Mucosa of descending colon (tissue), 3 donors: ENCODE measurements at regions of chr12 and their contacts with region 1.

Region 1: DNA sequence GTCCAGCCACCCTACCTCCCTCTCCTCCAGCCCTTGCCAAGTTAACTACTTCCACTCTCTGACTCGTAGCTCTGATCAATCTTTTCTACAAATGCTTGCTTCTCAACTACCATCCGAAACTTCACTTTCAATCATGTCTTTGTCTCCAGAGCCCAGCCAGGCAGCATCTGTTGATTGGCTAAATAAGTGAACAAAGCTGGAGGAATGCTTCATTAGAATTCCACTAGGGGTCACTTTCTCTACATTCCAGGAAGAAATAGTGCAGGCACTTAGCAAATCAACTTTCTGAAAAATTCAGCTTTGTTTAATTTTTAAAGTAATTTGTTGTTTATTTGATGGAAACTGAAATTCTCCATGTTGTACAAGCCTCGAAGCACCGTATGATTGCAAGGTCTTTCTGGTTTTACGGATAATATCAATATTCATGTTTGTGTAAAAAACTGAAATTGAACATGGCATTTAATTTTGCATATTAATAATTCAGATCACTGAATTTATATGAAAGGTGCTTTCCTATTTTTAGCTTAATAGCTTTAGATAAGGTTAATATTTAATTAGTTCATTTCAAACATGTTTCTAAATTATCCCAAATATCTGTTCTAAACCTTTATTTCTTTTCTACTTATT is 32.4 kb upstream of the HELB start:
- DNase-seq: peak in 1 of 3 donors; percentile 21
- ATAC-seq: peak; percentile 67
- H3K4me3 ChIP-seq: no peak overlapping the region
- H3K4me1 ChIP-seq: no peaks in the 10 kb centered on the region
- CTCF ChIP-seq: no peak

Region 2: GRCh38 chr12:66055837-66056319 is 214.0 kb before region 1 on chr12:
- intact Hi-C with region 1: no loop called
- DNase-seq: no peak
- ATAC-seq: no peak
- H3K4me3 ChIP-seq: no peak overlapping the region
- H3K4me1 ChIP-seq: no peaks in the 10 kb centered on the region
- CTCF ChIP-seq: no peak

Region 3: DNA sequence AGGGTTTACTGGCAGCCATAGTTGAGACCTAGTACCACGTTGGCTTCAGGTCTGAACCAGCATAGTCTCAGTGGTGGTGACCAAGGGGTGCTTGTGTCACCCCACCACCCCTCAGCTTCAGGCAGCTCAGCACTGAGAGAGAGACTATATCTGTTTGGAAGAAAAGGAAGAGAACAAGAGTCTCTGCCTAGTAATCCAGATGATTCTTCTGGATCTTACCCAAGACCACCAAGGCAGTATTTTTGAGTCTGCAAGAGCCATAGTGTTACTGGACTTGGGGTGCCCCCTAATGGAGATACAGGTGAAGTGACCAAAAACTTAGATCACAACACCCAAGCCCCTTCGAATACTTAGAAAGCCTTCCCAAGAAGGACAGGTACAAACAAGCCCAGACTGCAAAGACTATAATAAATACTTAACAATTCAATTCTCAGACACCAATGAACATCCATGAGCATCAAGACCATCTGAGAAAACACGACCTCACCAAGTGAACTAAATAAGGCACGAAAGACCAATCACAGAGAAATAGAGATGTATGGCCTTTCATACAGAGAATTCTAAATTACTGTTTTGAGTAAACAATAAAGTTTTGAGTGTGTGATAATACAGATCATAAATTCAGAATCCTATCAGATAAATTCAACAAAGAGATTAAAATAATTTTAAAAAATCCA is 139.5 kb after region 1 on chr12:
- intact Hi-C with region 1: loop called in 1 of 2 experiments (anchors 10 kb)
- DNase-seq: peak in 1 of 3 donors; percentile 53
- ATAC-seq: peak; percentile 52
- H3K4me3 ChIP-seq: no peak overlapping the region
- H3K4me1 ChIP-seq: no peaks in the 10 kb centered on the region
- CTCF ChIP-seq: peak; percentile 22

Region 4: GRCh38 chr12:66693901-66694675 is 424.2 kb after region 1 on chr12:
- intact Hi-C with region 1: loop called in 1 of 2 experiments (anchors 10 kb)
- DNase-seq: peak in 1 of 3 donors; percentile 59
- ATAC-seq: peak; percentile 67
- H3K4me3 ChIP-seq: no peak overlapping the region
- H3K4me1 ChIP-seq: no peaks in the 10 kb centered on the region
- CTCF ChIP-seq: no peak

Region 5: GRCh38 chr12:66739933-66740648 is 470.2 kb after region 1 on chr12:
- intact Hi-C with region 1: no loop called
- DNase-seq: no peak
- ATAC-seq: no peak
- H3K4me3 ChIP-seq: no peak overlapping the region
- H3K4me1 ChIP-seq: no peaks in the 10 kb centered on the region
- CTCF ChIP-seq: no peak